ENCODE measurements at regions of chr2 and their contacts with region 1.

Region 1: GRCh38 chr2:230793572-230794359 is 71.0 kb upstream of the ITM2C start:
- DNase-seq: peak; percentile 91
- H3K4me3 Mint-ChIP-seq: peak overlapping the region; percentile 65
- H3K27ac Mint-ChIP-seq: peak overlapping the region; percentile 95
- H3K4me1 Mint-ChIP-seq: peaks cover 43% of the 10 kb centered on the region
- H3K27me3 Mint-ChIP-seq: no peaks in the 10 kb centered on the region

Region 2: GRCh38 chr2:230643576-230644291 is 150.0 kb before region 1 on chr2:
- intact Hi-C with region 1: loop called (anchors 1 kb)
- DNase-seq: peak; percentile 87
- H3K4me3 Mint-ChIP-seq: peak overlapping the region; percentile 28
- H3K27ac Mint-ChIP-seq: peak overlapping the region; percentile 90
- H3K4me1 Mint-ChIP-seq: peaks cover 24% of the 10 kb centered on the region
- H3K27me3 Mint-ChIP-seq: no peaks in the 10 kb centered on the region

Region 3: GRCh38 chr2:230668184-230668938 is 125.4 kb before region 1 on chr2:
- intact Hi-C with region 1: loop called (anchors 2 kb)
- DNase-seq: peak; percentile 77
- H3K4me3 Mint-ChIP-seq: peak overlapping the region; percentile 73
- H3K27ac Mint-ChIP-seq: peak overlapping the region; percentile 96
- H3K4me1 Mint-ChIP-seq: peaks cover 69% of the 10 kb centered on the region
- H3K27me3 Mint-ChIP-seq: no peaks in the 10 kb centered on the region

Region 4: GRCh38 chr2:230751062-230751461 is 42.7 kb before region 1 on chr2:
- intact Hi-C with region 1: loop called (anchors 1 kb)
- DNase-seq: peak; percentile 65
- H3K4me3 Mint-ChIP-seq: no peak overlapping the region
- H3K27ac Mint-ChIP-seq: peak overlapping the region; percentile 70
- H3K4me1 Mint-ChIP-seq: peaks cover 63% of the 10 kb centered on the region
- H3K27me3 Mint-ChIP-seq: no peaks in the 10 kb centered on the region

Region 5: GRCh38 chr2:230781130-230781797 is 12.5 kb before region 1 on chr2:
- intact Hi-C with region 1: loop called (anchors 1 kb)
- DNase-seq: peak; percentile 84
- H3K4me3 Mint-ChIP-seq: peak overlapping the region; percentile 24
- H3K27ac Mint-ChIP-seq: peak overlapping the region; percentile 77
- H3K4me1 Mint-ChIP-seq: peaks cover 68% of the 10 kb centered on the region
- H3K27me3 Mint-ChIP-seq: no peaks in the 10 kb centered on the region